HEK293 (cell line): ENCODE measurements at regions of chr1 and their contacts with region 1.

Region 1: DNA sequence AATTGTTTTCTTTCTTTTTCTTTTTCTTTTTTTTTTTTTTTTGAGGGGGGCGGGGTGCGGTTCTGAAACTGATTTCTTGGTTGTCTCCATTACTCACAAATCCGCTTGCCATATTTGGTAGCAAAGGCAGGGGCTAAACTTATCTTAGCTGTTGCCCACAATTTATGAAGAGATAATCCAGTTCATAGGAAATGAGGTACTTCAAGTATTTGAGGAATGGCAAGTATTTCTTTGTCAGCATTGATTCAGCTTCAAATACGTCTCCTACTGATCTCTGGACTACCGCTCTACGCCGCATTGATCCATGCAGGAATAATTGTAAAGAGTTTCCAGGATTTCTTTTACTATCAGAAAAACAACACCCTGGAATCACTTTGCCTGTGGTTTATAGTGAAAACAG is 289.2 kb upstream of the DPYD start:
- H3K4me3 ChIP-seq: no peak overlapping the region; the same call in 1 of the 2 replicates
- H3K27ac ChIP-seq: no peak overlapping the region
- H3K4me1 ChIP-seq: no peaks in the 10 kb centered on the region
- CTCF ChIP-seq: no peak

Region 2: GRCh38 chr1:97996880-97997279 is 213.2 kb before region 1 on chr1:
- CTCF ChIA-PET with region 1: no interaction called
- POLR2A ChIA-PET with region 1: no interaction called
- H3K4me3 ChIP-seq: no peak overlapping the region
- H3K27ac ChIP-seq: no peak overlapping the region
- H3K4me1 ChIP-seq: no peaks in the 10 kb centered on the region
- CTCF ChIP-seq: no peak

Region 3: GRCh38 chr1:98221923-98222322 is 11.9 kb after region 1 on chr1:
- CTCF ChIA-PET with region 1: no interaction called
- POLR2A ChIA-PET with region 1: no interaction called
- H3K4me3 ChIP-seq: no peak overlapping the region
- H3K27ac ChIP-seq: no peak overlapping the region
- H3K4me1 ChIP-seq: no peaks in the 10 kb centered on the region
- CTCF ChIP-seq: no peak

Region 4: GRCh38 chr1:98468111-98468717 is 258.1 kb after region 1 on chr1:
- CTCF ChIA-PET with region 1: interaction called, 11 read pairs
- POLR2A ChIA-PET with region 1: no interaction called
- H3K4me3 ChIP-seq: no peak overlapping the region
- H3K27ac ChIP-seq: no peak overlapping the region
- H3K4me1 ChIP-seq: no peaks in the 10 kb centered on the region
- CTCF ChIP-seq: no peak